ENCODE measurements at regions of chr11 and their contacts with region 1.

Region 1: DNA sequence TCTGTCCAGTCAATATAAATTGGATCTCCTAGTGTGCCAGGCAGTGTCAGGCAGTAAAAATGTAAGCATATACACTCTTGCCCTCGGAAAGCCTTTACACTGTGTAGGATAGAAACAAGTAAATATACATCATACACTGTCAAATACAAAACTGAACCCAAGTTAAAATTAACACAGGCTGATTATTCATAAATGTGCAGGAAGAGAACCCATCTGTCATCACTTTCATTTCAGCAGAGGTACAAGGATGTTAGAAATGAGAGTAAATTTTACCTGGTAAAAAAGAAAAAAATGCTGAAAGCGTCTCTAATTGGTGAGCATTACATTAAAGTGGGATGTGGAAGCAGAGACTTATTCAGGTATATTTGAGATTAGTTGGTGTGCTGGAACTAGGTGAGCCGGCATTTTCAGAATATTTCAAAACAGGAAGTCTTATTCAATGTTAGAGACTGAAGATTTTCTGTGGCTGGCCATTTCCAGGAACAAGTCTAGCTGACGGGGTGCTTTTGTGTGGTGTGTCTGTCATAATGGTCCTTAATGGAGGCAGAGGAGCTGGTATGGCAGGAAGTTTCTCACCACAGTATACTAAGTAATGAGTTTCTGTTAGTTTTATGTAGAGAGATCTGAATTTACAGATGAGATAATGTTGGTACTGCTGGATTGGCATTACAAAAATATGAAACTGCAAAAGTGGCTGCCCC is 192.6 kb downstream of the CASP12 start:
- DNase-seq: peak; percentile 79
- H3K4me3 Mint-ChIP-seq: peak overlapping the region; percentile 81
- H3K27ac Mint-ChIP-seq: peak overlapping the region; percentile 94
- H3K4me1 Mint-ChIP-seq: peaks cover 55% of the 10 kb centered on the region
- H3K27me3 Mint-ChIP-seq: no peaks in the 10 kb centered on the region

Region 2: GRCh38 chr11:104657083-104657482 is 48.6 kb before region 1 on chr11:
- intact Hi-C with region 1: loop called (anchors 1 kb)
- DNase-seq: no peak
- H3K4me3 Mint-ChIP-seq: peak overlapping the region; percentile 11
- H3K27ac Mint-ChIP-seq: no peak overlapping the region
- H3K4me1 Mint-ChIP-seq: peaks cover 33% of the 10 kb centered on the region
- H3K27me3 Mint-ChIP-seq: no peaks in the 10 kb centered on the region

Region 3: DNA sequence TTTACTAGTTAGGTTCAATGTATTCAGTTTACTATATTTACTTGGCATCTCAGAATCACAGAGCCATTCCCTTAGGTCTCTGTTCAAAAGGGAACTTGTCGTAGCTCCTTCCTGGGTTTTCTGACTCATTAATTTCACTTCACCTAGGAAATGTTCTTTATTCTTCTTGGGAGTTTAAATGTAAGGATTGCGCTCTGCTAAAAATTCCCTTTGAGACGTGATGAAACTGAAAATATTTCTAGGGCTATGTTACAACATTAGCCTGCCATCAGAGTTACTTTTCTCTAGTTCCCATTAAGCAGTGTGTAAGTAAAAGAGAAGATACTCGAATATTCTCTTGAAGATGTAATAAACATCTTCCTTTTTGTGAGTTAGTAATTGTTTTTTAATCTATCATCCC is 16.9 kb before region 1 on chr11:
- intact Hi-C with region 1: loop called (anchors 2 kb)
- DNase-seq: no peak
- H3K4me3 Mint-ChIP-seq: no peak overlapping the region
- H3K27ac Mint-ChIP-seq: no peak overlapping the region
- H3K4me1 Mint-ChIP-seq: peaks cover 18% of the 10 kb centered on the region
- H3K27me3 Mint-ChIP-seq: no peaks in the 10 kb centered on the region

Region 4: DNA sequence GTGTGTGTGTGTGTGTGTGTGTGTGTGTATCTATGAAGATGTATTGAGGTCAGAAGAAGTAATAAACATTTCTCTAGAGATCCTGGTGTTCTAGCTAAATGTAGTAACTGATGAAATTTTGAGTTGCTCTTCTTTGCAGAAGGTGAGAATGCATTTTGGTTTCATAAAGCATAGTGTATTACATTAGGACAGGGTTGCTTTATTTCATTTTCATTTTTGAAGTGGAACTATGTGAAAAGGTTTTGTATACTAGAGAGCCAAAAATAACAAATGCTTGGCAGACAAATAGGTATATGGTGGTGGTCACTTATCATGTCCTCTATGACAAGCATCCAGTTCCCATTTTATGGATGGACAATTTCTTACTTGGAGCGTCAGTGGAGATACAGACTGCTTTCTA is 93.6 kb after region 1 on chr11:
- intact Hi-C with region 1: loop called (anchors 2 kb)
- DNase-seq: no peak
- H3K4me3 Mint-ChIP-seq: peak overlapping the region; percentile 78
- H3K27ac Mint-ChIP-seq: peak overlapping the region; percentile 73
- H3K4me1 Mint-ChIP-seq: peaks cover 35% of the 10 kb centered on the region
- H3K27me3 Mint-ChIP-seq: no peaks in the 10 kb centered on the region

Region 5: DNA sequence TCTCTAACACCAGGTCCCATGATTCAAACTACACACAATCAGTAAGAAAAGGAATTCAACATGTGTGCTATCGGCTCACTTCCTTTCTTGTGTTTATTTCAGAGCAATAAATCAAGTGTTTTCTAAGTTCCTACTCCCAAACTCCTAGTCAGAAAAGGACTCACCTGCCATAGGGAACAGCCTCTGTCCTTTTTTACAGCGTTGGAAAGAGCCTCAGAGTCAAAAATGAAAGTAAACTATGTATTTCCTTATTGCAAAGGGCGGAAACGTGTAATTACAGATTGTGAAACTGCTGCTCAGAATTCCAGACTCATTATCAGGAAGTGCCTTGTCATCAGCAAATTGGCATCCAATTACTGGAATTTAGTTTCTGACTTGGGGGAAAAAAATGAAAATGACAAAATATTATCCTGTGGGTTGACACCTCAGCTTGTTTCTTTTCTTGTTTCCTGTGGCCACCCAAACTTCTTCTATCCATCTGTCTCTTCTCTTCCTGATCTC is 262.8 kb after region 1 on chr11 and contains the start of gene CASP4:
- intact Hi-C with region 1: loop called (anchors 2 kb)
- DNase-seq: no peak
- H3K4me3 Mint-ChIP-seq: peak within 1 kb of the TSS; percentile 87
- H3K27ac Mint-ChIP-seq: peak within 1 kb of the TSS; percentile 85
- H3K4me1 Mint-ChIP-seq: peaks cover 50% of the 10 kb centered on the region
- H3K27me3 Mint-ChIP-seq: peaks cover 2% of the 10 kb centered on the region
- total RNA-seq, gene CASP4: 32.9 and 34.0 TPM in 2 replicates

Region 6: GRCh38 chr11:105100206-105100605 is 394.6 kb after region 1 on chr11:
- intact Hi-C with region 1: loop called (anchors 2 kb)
- DNase-seq: no peak
- H3K4me3 Mint-ChIP-seq: peak overlapping the region; percentile 90
- H3K27ac Mint-ChIP-seq: peak overlapping the region; percentile 95
- H3K4me1 Mint-ChIP-seq: peaks cover 33% of the 10 kb centered on the region
- H3K27me3 Mint-ChIP-seq: peaks cover 1% of the 10 kb centered on the region

Measured in activated T-helper 1 cell treated with anti-CD3 and anti-CD28 coated beads, Interleukin-12 subunit alpha, Interleukin-12 subunit beta, Interleukin-2, Interleukin-4 antibody, amounts not matched to agents 30 ng/mL and 10 ng/mL and 1 ng/mL, durations not matched to agents 14 hours and 24 hours and 36 hours (primary cell).